ENCODE measurements at regions of chr7 and their contacts with region 1.

Region 1: GRCh38 chr7:37109843-37110242 is 338.8 kb downstream of the ELMO1 start:
- DNase-seq: peak; percentile 35
- ATAC-seq: peak; percentile 98
- H3K4me3 ChIP-seq: no peak overlapping the region
- H3K27ac ChIP-seq: no peak overlapping the region
- H3K4me1 ChIP-seq: peaks cover 31% of the 10 kb centered on the region
- H3K27me3 ChIP-seq: 0 out of 5 replicates have a peak, but pooled peaks cover 0 to 1% of the 10 kb centered on the region in 2 experiments
- CTCF ChIP-seq: 0 out of 2 replicates have a peak, but pooled peaks have one; percentile 35
- EP300 ChIP-seq: no peak
- POLR2A ChIP-seq: no peak
- RAD21 ChIP-seq: no peak

Region 2: DNA sequence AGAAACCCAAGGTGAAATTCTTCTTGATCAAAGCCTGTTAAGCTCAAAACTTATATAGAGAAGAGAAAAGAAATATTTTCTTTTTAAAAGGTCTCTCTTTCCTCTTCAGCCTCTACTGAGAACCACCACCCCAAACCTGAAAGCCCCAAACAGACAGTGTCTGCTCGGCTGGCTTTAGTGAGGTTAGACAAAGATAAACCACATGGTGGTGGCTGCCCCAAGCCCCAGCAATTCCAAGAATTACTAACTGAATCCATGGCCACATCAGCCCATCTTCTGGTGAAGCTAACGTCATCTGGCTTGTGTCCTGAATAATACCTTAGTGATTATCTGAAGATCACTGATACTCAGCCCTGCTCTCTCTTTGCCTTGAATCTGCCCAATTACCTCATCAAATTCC is 63.8 kb after region 1 on chr7:
- CTCF ChIA-PET with region 1: no interaction called
- POLR2A ChIA-PET with region 1: no interaction called
- in situ Hi-C with region 1: no loop called
- intact Hi-C with region 1: loop called (anchors 10 kb)
- DNase-seq: no peak
- ATAC-seq: no peak
- H3K4me3 ChIP-seq: no peak overlapping the region
- H3K27ac ChIP-seq: no peak overlapping the region
- H3K4me1 ChIP-seq: no peaks in the 10 kb centered on the region
- H3K27me3 ChIP-seq: no peaks in the 10 kb centered on the region
- CTCF ChIP-seq: no peak
- EP300 ChIP-seq: no peak
- POLR2A ChIP-seq: no peak
- RAD21 ChIP-seq: no peak